Activated CD4-positive, alpha-beta T cell treated with anti-CD3 and anti-CD28 coated beads, Interleukin-2, amount 10 ng/mL, durations not matched to agents 24 days and 14 days (primary cell): ENCODE measurements at regions of chr10 and their contacts with region 1.

Region 1: DNA sequence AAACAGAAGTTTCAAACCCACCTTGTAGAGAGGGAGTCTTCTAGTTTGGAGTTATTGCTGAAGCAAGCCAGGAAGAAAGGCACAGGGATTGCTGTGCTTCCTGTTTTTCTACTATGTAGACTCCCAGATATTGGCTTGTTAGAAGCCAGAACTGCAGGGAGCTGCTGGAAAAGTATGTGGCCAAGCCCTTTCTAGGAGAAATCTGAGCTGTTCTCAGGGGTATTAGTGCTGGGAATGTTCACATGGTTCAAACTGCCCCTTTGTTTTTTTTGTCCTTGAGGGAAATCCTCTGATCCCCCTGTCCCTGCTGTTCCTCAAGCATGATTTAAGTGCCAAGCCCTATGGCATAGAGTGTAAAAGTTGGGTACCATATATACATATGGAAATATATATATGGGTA is 184.0 kb downstream of the CCDC7 start:
- DNase-seq: no peak
- H3K4me3 Mint-ChIP-seq: no peak overlapping the region
- H3K27ac Mint-ChIP-seq: no peak overlapping the region
- H3K4me1 Mint-ChIP-seq: no peaks in the 10 kb centered on the region
- H3K27me3 Mint-ChIP-seq: no peaks in the 10 kb centered on the region

Region 2: DNA sequence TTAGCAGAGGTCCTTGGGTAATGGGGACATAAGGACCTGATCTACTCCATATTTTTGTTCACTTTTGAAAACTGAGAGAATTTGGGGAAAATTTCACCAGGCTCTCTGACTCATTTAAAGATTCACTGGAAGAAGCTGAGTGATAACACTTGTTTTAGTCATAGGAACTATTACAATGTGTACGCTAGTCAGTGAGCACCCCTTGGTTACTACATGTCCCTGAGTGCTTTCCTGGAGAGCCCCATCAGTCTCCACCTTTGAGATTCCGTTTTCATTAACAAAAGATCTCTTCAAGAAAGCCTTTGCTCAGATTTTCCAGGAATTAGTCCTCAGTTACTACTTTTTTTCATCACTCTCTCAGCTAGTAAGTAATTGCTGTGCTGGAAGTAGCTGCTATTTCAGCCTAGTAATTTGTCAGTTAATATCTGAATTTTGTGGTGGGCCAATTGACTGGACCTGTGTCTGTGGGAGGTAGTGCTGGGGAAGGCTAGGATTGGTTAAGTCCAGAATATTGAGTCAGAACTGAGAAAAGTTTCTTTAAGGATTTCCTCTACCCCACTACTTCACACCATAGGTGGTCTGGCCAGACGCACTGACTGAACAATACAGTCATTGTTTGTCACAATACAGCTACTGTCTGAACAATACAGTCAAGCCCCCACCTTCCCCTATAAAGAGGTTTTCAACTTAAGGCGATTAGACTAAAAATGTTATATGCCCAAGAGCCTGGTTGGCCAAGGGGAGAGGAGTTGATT is 51.1 kb after region 1 on chr10:
- intact Hi-C with region 1: loop called (anchors 5 kb)
- DNase-seq: no peak
- H3K4me3 Mint-ChIP-seq: no peak overlapping the region
- H3K27ac Mint-ChIP-seq: no peak overlapping the region
- H3K4me1 Mint-ChIP-seq: no peaks in the 10 kb centered on the region
- H3K27me3 Mint-ChIP-seq: no peaks in the 10 kb centered on the region